Breast epithelium (tissue), 4 donors: ENCODE measurements at regions of chr1 and their contacts with region 1.

Region 1: DNA sequence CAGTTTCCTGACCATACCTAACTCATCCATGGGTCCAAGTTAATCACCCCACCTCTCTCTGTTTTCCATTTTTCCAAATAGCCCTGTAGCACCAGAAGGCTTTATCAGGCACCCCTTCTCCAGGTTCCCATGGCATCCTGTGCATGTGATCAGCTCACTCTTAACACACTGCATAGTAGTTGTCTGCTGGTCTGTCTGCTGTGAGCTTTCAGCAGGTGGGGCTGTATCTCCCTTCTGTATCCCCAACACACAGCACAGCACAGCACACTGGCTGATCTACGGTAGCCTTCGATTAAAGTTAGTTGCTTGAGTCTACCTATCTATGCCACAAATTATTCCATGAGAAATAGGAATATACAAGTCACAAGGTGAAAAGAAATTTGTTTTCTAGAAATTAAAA is 54.3 kb upstream of the C1orf198 start:
- DNase-seq: no peak
- H3K4me3 ChIP-seq: no peak overlapping the region
- H3K27ac ChIP-seq: no peak overlapping the region
- H3K4me1 ChIP-seq: no peaks in the 10 kb centered on the region
- H3K27me3 ChIP-seq: no peaks in the 10 kb centered on the region
- CTCF ChIP-seq: no peak
- POLR2A ChIP-seq: no peak

Region 2: GRCh38 chr1:230517786-230518185 is 404.8 kb before region 1 on chr1:
- intact Hi-C with region 1: no loop called
- DNase-seq: no peak
- H3K4me3 ChIP-seq: no peak overlapping the region
- H3K27ac ChIP-seq: no peak overlapping the region
- H3K4me1 ChIP-seq: no peaks in the 10 kb centered on the region
- H3K27me3 ChIP-seq: no peaks in the 10 kb centered on the region
- CTCF ChIP-seq: no peak
- POLR2A ChIP-seq: no peak

Region 3: DNA sequence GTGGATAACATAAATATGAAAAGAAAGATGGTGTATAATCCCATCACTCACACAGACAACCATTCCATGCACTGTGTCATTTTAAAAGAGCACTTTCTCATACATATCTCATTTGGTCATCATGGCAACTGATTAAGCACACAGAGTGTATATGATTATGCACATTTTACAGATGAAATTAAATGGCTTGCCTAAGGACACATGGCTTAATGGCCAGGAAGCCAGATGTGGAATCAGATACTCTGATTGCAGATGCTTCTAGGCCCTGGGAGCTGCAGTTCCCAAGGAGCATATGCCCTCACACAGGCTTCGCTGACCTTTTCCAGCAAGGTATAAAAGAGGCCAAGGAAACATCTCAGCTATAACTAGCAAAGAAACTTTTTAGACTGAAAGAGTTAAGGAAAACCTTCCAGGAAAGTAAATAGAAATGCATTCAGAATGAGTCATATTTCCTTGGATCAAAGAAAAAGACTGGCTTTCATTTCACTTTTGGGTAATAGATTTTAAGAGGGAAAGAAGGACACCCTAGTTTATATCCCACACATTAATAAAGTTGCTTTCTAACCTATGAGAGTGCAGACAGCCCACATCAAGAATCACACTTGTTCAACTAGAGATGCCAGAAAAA is 137.1 kb after region 1 on chr1:
- intact Hi-C with region 1: loop called (anchors 5 kb)
- DNase-seq: no peak
- H3K4me3 ChIP-seq: no peak overlapping the region
- H3K27ac ChIP-seq: no peak overlapping the region
- H3K4me1 ChIP-seq: no peaks in the 10 kb centered on the region
- H3K27me3 ChIP-seq: no peaks in the 10 kb centered on the region
- CTCF ChIP-seq: no peak
- POLR2A ChIP-seq: no peak